WTC11 (cell line): ENCODE measurements at regions of chr10 and their contacts with region 1.

Region 1: GRCh38 chr10:127679642-127680255 is 57.2 kb upstream of the FOXI2 start:
- DNase-seq: peak; percentile 22
- ATAC-seq: peak; percentile 43; the same call in 1 of the 2 replicates
- H3K4me3 Mint-ChIP-seq: no peak overlapping the region
- H3K27ac Mint-ChIP-seq: no peak overlapping the region
- H3K4me1 Mint-ChIP-seq: peaks cover 8% of the 10 kb centered on the region
- H3K27me3 Mint-ChIP-seq: no peaks in the 10 kb centered on the region
- CTCF ChIP-seq: peak; percentile 62

Region 2: GRCh38 chr10:127386606-127387327 is 293.0 kb before region 1 on chr10:
- CTCF ChIA-PET with region 1: no interaction called
- POLR2A ChIA-PET with region 1: no interaction called
- DNase-seq: peak; percentile 60
- ATAC-seq: peak; percentile 89
- H3K4me3 Mint-ChIP-seq: no peak overlapping the region
- H3K27ac Mint-ChIP-seq: peak overlapping the region; percentile 91; the same call in 1 of the 2 replicates
- H3K4me1 Mint-ChIP-seq: peaks cover 17% of the 10 kb centered on the region
- H3K27me3 Mint-ChIP-seq: no peaks in the 10 kb centered on the region
- CTCF ChIP-seq: no peak

Region 3: DNA sequence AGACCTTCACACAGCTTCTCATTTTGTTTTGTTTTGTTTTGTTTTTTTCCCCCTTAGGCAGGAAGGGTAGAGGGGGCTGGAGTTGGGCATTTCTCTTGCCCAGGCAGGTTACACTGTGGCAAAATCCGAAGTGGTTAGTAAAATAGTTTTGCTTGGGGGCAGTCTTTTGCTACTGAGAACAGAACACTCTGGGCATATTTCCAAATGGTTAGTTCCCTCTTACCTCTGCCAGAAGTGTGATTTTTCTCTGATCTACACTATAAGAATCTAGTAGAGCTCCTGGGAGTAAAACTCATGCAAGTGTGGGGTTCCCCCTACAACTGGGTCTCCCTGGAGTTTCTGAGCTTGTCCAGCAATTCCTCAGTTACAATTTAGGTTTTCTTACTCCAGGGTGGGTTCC is 68.9 kb before region 1 on chr10:
- CTCF ChIA-PET with region 1: no interaction called
- POLR2A ChIA-PET with region 1: no interaction called
- DNase-seq: no peak
- ATAC-seq: no peak
- H3K4me3 Mint-ChIP-seq: no peak overlapping the region
- H3K27ac Mint-ChIP-seq: no peak overlapping the region
- H3K4me1 Mint-ChIP-seq: peaks cover 10% of the 10 kb centered on the region
- H3K27me3 Mint-ChIP-seq: no peaks in the 10 kb centered on the region
- CTCF ChIP-seq: no peak

Region 4: DNA sequence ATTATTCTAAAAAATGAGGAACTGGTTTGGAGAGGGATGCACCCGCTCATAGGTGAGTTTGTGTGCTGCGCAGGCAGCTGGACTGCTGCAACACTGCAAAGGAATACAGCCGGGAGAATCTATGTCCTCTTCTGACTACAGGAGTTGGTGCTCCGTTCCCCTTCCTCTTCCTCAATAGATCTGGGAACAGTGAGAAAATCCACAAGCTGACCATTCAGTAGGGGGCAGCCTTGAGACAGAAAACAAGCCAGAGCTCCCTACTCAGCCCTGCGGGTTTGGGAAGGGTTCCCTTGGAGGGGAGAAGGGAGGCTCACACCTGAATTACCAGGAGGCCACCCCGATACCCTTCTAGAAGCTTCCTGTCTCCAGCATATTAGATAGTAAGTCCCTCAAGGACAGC is 30.1 kb before region 1 on chr10:
- CTCF ChIA-PET with region 1: interaction called, 10 read pairs
- POLR2A ChIA-PET with region 1: no interaction called
- DNase-seq: peak; percentile 78
- ATAC-seq: peak; percentile 99
- H3K4me3 Mint-ChIP-seq: no peak overlapping the region
- H3K27ac Mint-ChIP-seq: no peak overlapping the region
- H3K4me1 Mint-ChIP-seq: no peaks in the 10 kb centered on the region
- H3K27me3 Mint-ChIP-seq: no peaks in the 10 kb centered on the region
- CTCF ChIP-seq: peak; percentile 27; the same call in 1 of the 2 replicates

Region 5: DNA sequence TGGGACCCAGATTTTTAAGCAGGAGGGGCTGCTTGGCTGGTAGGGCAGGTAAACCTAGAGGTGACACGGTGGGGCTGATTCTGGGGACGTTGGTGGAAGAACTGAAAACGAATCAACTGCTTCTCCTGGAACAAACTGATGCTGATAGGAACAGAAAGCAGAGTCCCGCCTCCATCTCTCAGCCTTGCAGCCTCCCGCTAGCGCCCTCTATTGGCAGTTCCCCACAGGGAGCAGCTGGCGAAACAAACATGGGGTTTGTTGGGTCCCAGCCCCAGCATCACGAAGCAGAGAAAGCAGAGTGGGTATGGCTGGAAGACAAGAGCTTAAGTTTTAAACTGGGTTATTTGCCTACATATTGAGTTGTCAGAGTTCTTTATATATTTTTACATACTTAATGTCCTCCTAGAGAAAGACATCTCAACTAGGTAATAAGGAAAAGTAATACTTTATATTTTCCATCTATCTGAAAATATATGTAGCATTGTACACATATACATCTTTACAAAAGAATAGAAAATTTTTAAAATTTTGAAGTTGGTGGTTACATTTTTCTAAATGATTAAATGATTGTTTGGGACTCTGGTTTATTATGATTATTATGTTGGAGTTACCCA is 14.9 kb after region 1 on chr10:
- CTCF ChIA-PET with region 1: interaction called, 47 read pairs
- POLR2A ChIA-PET with region 1: interaction called, 5 read pairs
- DNase-seq: peak; percentile 93
- ATAC-seq: peak; percentile 90
- H3K4me3 Mint-ChIP-seq: no peak overlapping the region
- H3K27ac Mint-ChIP-seq: no peak overlapping the region; the same call in 1 of the 2 replicates
- H3K4me1 Mint-ChIP-seq: peaks cover 33% of the 10 kb centered on the region
- H3K27me3 Mint-ChIP-seq: no peaks in the 10 kb centered on the region
- CTCF ChIP-seq: peak; percentile 79